T-cell (primary cell): ENCODE measurements at regions of chr5 and their contacts with region 1.

Region 1: GRCh38 chr5:50365426-50366251 is 75.4 kb downstream of the EMB start:
- DNase-seq: no peak
- ATAC-seq: no peak
- H3K4me3 ChIP-seq: no peak overlapping the region
- H3K4me3 Mint-ChIP-seq: no peak overlapping the region
- H3K27ac ChIP-seq: no peak overlapping the region
- H3K27ac Mint-ChIP-seq: peak overlapping the region; percentile 84 to 86
- H3K4me1 ChIP-seq: peaks cover 4 to 17% of the 10 kb centered on the region in 2 experiments
- H3K4me1 Mint-ChIP-seq: peaks cover 31 to 43% (median 39%) of the 10 kb centered on the region in 3 donors
- H3K27me3 ChIP-seq: no peaks in the 10 kb centered on the region
- H3K27me3 Mint-ChIP-seq: no peaks in the 10 kb centered on the region

Region 2: DNA sequence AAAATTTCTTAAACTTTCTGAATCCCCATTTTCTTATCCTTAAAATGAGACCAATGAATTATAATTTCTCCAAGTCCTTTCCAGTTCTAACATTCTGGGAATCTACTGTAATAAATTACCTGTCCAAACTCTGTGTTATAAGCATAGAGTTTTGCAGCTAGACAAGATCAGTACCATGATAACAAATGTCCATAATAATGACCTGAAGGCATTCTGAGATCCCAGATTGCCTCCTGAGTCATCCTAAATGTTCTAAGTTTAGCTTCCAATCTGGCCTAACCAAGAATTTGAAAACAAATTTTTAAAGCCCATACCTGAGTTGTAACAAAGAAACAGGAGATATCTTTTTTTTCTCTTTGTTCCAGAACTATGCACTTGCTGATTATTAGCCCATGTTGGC is 29.0 kb before region 1 on chr5:
- CTCF ChIA-PET with region 1: no interaction called
- POLR2A ChIA-PET with region 1: no interaction called
- DNase-seq: no peak
- ATAC-seq: no peak
- H3K4me3 ChIP-seq: no peak overlapping the region
- H3K4me3 Mint-ChIP-seq: no peak overlapping the region
- H3K27ac ChIP-seq: no peak overlapping the region
- H3K27ac Mint-ChIP-seq: no peak overlapping the region
- H3K4me1 ChIP-seq: no peaks in the 10 kb centered on the region
- H3K4me1 Mint-ChIP-seq: peaks cover 9 to 10% (median 9%) of the 10 kb centered on the region in 3 donors
- H3K27me3 ChIP-seq: no peaks in the 10 kb centered on the region
- H3K27me3 Mint-ChIP-seq: no peaks in the 10 kb centered on the region

Region 3: DNA sequence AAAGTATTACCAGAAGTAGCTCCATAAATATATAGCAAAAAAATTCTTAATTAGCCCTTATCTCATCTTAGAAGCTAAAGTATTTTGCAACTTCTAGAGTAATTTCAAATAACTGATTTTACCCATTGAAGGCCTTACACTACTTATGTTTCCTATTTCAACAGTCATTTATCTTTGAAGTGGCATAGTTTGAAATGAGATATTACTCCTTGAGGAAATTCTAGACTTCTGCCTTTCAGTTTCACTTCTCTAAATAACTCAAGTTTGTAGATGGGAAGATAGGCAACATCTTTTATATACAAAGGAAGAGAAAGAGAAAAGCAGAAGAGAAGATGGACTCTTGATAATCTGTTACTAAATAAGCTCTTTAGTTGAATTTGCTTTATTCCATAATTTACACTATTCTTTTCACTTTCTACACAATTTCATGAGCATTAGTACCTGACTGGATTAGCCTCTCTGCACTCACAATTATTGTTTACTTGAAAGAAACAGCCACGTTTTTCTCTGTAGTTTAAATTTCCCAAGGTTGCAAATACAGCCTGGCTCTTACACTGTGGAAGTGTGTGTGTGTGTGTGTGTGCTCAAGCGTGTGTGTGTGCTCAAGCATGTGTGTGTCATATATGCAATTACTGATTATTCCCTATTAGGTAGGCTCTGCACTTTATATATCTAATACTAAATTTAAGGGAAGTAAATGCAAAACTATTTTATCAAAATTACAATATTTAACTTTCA is 136.0 kb after region 1 on chr5:
- CTCF ChIA-PET with region 1: no interaction called
- POLR2A ChIA-PET with region 1: no interaction called
- DNase-seq: peak in 1 of 35 experiments; percentile 22
- ATAC-seq: peak in 2 of 4 experiments; percentile 26 to 57
- H3K4me3 ChIP-seq: no peak overlapping the region
- H3K4me3 Mint-ChIP-seq: peak overlapping the region; percentile 28 to 48 (median 35)
- H3K27ac ChIP-seq: no peak overlapping the region
- H3K27ac Mint-ChIP-seq: peak overlapping the region; percentile 68 to 86
- H3K4me1 ChIP-seq: peaks cover 0 to 7% of the 10 kb centered on the region in 2 experiments
- H3K4me1 Mint-ChIP-seq: peaks cover 6 to 22% (median 19%) of the 10 kb centered on the region in 3 donors
- H3K27me3 ChIP-seq: no peaks in the 10 kb centered on the region
- H3K27me3 Mint-ChIP-seq: no peaks in the 10 kb centered on the region

Region 4: GRCh38 chr5:50898966-50899365 is 533.3 kb after region 1 on chr5:
- CTCF ChIA-PET with region 1: interaction called in 1 of 2 experiments, 15 read pairs
- POLR2A ChIA-PET with region 1: no interaction called
- DNase-seq: no peak
- ATAC-seq: no peak
- H3K4me3 ChIP-seq: no peak overlapping the region
- H3K4me3 Mint-ChIP-seq: no peak overlapping the region
- H3K27ac ChIP-seq: no peak overlapping the region
- H3K27ac Mint-ChIP-seq: peak overlapping the region in 1 of 2 donors; percentile 10
- H3K4me1 ChIP-seq: no peaks in the 10 kb centered on the region
- H3K4me1 Mint-ChIP-seq: no peaks in the 10 kb centered on the region
- H3K27me3 ChIP-seq: no peaks in the 10 kb centered on the region
- H3K27me3 Mint-ChIP-seq: peaks cover 14 to 27% of the 10 kb centered on the region in 2 donors